ENCODE measurements at regions of chr11 and their contacts with region 1.

Region 1: GRCh38 chr11:78564490-78565467 is 9.9 kb downstream of the NARS2 start:
- DNase-seq: peak; percentile 52
- H3K4me3 Mint-ChIP-seq: no peak overlapping the region
- H3K27ac Mint-ChIP-seq: peak overlapping the region; percentile 73
- H3K4me1 Mint-ChIP-seq: peaks cover 45% of the 10 kb centered on the region
- H3K27me3 Mint-ChIP-seq: no peaks in the 10 kb centered on the region

Region 2: DNA sequence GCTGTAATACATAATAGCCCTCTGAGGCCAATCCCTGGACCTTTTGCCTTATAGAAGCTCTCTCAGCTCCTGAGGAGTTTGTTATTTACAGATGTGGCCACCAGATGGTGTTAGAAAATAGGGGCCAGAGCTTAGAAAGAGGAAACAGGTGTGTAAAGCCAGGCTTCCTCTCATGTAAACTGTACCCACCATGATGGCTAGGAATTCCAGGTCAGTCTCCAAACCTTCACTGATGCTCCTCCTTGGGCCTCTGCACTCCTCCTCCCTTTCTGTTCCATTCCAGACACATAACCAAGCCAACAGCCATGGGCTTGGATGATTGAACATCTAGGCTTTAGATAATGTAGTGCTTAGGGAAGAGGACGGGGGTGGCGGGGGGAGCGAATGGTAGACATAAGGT is 336.3 kb before region 1 on chr11:
- CTCF ChIA-PET with region 1: interaction called, 65 read pairs
- DNase-seq: peak; percentile 39
- H3K4me3 Mint-ChIP-seq: no peak overlapping the region
- H3K27ac Mint-ChIP-seq: no peak overlapping the region
- H3K4me1 Mint-ChIP-seq: peaks cover 55% of the 10 kb centered on the region
- H3K27me3 Mint-ChIP-seq: no peaks in the 10 kb centered on the region

Region 3: GRCh38 chr11:78432058-78432515 is 132.7 kb before region 1 on chr11:
- CTCF ChIA-PET with region 1: interaction called, 24 read pairs
- DNase-seq: peak; percentile 35
- H3K4me3 Mint-ChIP-seq: no peak overlapping the region
- H3K27ac Mint-ChIP-seq: no peak overlapping the region
- H3K4me1 Mint-ChIP-seq: peaks cover 14% of the 10 kb centered on the region
- H3K27me3 Mint-ChIP-seq: no peaks in the 10 kb centered on the region

Region 4: GRCh38 chr11:78469901-78470300 is 94.9 kb before region 1 on chr11:
- CTCF ChIA-PET with region 1: no interaction called
- DNase-seq: no peak
- H3K4me3 Mint-ChIP-seq: no peak overlapping the region
- H3K27ac Mint-ChIP-seq: no peak overlapping the region
- H3K4me1 Mint-ChIP-seq: peaks cover 22% of the 10 kb centered on the region
- H3K27me3 Mint-ChIP-seq: no peaks in the 10 kb centered on the region

Measured in activated naive CD4-positive, alpha-beta T cell treated with anti-CD3 and anti-CD28 coated beads, Interleukin-2, amount 10 ng/mL, durations not matched to agents 7 days and 5 days (primary cell).